T-cell (primary cell): ENCODE measurements at regions of chr14 and their contacts with region 1.

Region 1: GRCh38 chr14:67695394-67695949 is at the start of gene RDH11:
- DNase-seq: peak; percentile 55 to 91 (median 77)
- ATAC-seq: peak; percentile 95 to 98 (median 98)
- H3K4me3 ChIP-seq: peak within 1 kb of the TSS; percentile 89 to 100
- H3K4me3 Mint-ChIP-seq: peak within 1 kb of the TSS; percentile 84 to 97 (median 86)
- H3K27ac ChIP-seq: peak within 1 kb of the TSS; percentile 66
- H3K27ac Mint-ChIP-seq: peak within 1 kb of the TSS; percentile 84
- H3K4me1 ChIP-seq: peaks cover 6 to 16% of the 10 kb centered on the region in 2 experiments
- H3K4me1 Mint-ChIP-seq: peaks cover 16 to 28% (median 21%) of the 10 kb centered on the region in 3 donors
- H3K27me3 ChIP-seq: no peaks in the 10 kb centered on the region
- H3K27me3 Mint-ChIP-seq: no peaks in the 10 kb centered on the region
- total RNA-seq, gene RDH11: 26.1 to 44.2 (median 40.0) TPM

Region 2: DNA sequence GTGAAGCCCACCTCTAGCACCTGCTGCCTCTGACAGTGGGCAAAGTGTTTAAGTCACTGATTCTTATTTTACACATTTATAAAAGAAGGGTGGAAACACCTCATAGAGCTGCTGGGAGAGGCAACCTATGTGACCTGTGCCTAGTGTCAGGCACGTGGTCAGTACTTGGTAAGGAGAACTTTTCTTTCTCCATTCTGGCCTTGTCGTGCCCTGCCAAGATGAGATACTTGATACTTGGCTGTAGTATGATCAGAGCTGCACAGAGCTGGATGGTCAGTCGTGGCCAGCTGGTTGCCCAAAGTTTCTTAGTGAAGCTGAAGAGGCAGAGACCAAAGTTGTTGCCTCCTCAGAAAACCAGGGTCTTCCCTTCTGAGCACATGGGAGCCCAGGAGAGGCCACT is 137.8 kb before region 1 on chr14:
- CTCF ChIA-PET with region 1: no interaction called
- POLR2A ChIA-PET with region 1: interaction called in 1 of 2 experiments, 12 read pairs
- DNase-seq: no peak
- ATAC-seq: no peak
- H3K4me3 ChIP-seq: no peak overlapping the region
- H3K4me3 Mint-ChIP-seq: no peak overlapping the region
- H3K27ac ChIP-seq: no peak overlapping the region
- H3K27ac Mint-ChIP-seq: no peak overlapping the region
- H3K4me1 ChIP-seq: no peaks in the 10 kb centered on the region
- H3K4me1 Mint-ChIP-seq: no peaks in the 10 kb centered on the region
- H3K27me3 ChIP-seq: peaks cover 0 to 19% of the 10 kb centered on the region in 2 experiments
- H3K27me3 Mint-ChIP-seq: no peaks in the 10 kb centered on the region

Region 3: GRCh38 chr14:67619446-67620216 is 75.8 kb before region 1 on chr14 and contains the start of gene ARG2:
- CTCF ChIA-PET with region 1: interaction called, 3 to 10 read pairs
- POLR2A ChIA-PET with region 1: interaction called in 1 of 2 experiments, 3 read pairs
- DNase-seq: peak; percentile 88 to 99 (median 96)
- ATAC-seq: peak; percentile 91 to 98 (median 98)
- H3K4me3 ChIP-seq: peak within 1 kb of the TSS; percentile 79 to 92
- H3K4me3 Mint-ChIP-seq: peak within 1 kb of the TSS; percentile 83 to 89 (median 85)
- H3K27ac ChIP-seq: peak within 1 kb of the TSS; percentile 92
- H3K27ac Mint-ChIP-seq: peak within 1 kb of the TSS; percentile 80 to 87
- H3K4me1 ChIP-seq: peaks cover 19 to 27% of the 10 kb centered on the region in 2 experiments
- H3K4me1 Mint-ChIP-seq: peaks cover 35 to 38% (median 36%) of the 10 kb centered on the region in 3 donors
- H3K27me3 ChIP-seq: peaks cover 2 to 11% of the 10 kb centered on the region in 2 experiments
- H3K27me3 Mint-ChIP-seq: peaks cover 0 to 2% of the 10 kb centered on the region in 2 donors
- total RNA-seq, gene ARG2: 0.62 to 2.6 (median 1.1) TPM

Region 4: DNA sequence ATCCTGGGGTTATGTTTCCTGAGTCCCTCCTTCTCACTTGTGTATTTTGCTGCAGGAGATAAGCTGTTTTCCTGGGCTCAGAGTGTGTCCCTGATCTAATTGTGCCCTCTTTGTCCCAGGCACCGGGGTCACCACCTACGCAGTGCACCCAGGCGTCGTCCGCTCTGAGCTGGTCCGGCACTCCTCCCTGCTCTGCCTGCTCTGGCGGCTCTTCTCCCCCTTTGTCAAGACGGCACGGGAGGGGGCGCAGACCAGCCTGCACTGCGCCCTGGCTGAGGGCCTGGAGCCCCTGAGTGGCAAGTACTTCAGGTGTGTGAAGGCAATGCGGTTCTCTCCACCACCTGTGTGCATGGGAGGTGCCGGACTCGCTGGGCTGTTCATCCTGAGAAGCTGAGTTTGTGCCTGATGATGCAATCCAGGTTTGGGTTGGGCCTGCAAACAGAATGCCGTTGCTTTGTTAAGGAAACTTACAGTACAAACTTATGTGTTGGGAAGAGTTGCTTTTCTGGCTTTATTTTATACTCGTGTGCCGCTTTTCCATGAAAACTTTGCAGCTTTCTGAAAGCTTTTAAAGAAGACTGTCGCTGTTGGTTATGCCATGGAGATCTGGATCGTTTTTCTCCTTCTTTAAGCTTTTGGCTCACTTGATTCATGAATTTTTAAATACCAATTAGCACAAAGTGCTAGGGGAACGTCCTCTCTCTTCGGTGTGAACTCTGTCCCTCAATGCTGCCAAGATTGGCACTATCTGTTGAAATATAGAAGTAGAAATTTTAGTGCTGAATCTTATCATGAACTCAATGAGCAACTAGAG is 33.8 kb after region 1 on chr14:
- CTCF ChIA-PET with region 1: no interaction called
- POLR2A ChIA-PET with region 1: no interaction called
- DNase-seq: no peak
- ATAC-seq: no peak
- H3K4me3 ChIP-seq: no peak overlapping the region
- H3K4me3 Mint-ChIP-seq: no peak overlapping the region
- H3K27ac ChIP-seq: no peak overlapping the region
- H3K27ac Mint-ChIP-seq: no peak overlapping the region
- H3K4me1 ChIP-seq: no peaks in the 10 kb centered on the region
- H3K4me1 Mint-ChIP-seq: no peaks in the 10 kb centered on the region
- H3K27me3 ChIP-seq: peaks cover 0 to 4% of the 10 kb centered on the region in 2 experiments
- H3K27me3 Mint-ChIP-seq: peaks cover 8 to 12% of the 10 kb centered on the region in 2 donors